CD4-positive, alpha-beta memory T cell (primary cell): ENCODE measurements at regions of chr2 and their contacts with region 1.

Region 1: DNA sequence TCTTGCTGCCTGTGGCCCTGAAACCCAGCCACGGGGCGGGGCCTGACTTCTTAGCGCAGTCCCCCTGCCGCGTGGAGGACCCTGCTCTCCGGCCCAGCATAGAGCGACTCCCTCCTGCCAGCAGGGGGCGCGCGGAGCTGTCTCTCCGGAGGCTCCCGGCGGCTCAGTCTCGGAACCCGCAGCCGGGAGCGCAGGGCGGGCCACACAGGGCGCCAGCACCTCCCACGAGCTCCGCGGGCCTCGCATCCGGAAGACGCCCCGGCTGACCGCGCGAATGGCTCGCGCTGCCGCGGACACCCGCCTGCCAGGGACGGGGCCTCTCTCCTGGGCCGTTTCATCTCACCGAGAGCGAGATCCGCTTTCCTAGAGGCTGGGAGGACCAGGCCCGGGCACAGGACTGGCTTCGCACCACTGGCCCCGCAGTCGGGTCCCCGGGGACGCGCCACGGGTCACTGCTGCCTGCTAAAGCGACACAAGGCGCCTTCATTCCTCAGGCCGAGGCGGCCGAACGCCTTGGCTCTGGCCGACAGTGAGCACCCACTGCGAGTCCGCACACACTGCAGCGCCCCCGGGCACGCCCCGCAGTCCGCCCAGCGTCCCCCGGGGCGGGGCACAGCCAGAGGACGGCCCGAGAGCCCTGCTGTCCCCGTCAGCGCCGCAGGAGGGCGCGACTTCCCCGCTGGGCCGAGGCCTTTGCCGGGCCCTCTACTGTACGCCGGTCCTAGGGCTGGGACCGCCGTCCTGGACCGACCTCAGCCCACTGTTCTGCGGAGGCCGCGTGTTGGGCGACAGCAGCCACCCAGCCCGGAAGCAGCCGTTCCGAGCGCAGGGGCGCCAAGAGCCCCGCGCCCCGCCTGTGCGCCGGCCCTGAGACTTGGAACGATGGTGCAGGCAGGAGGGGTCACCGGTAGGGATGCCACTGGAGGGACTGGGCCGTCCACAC is 39.0 kb upstream of the ARHGEF4 start:
- DNase-seq: peak; percentile 83 to 90 (median 89)
- H3K4me3 ChIP-seq: peak overlapping the region; percentile 42 to 95
- H3K4me3 Mint-ChIP-seq: peak overlapping the region; percentile 62 to 83 (median 72)
- H3K27ac ChIP-seq: peak overlapping the region; percentile 89
- H3K27ac Mint-ChIP-seq: peak overlapping the region; percentile 25 to 83 (median 62)
- H3K4me1 ChIP-seq: peaks cover 9% of the 10 kb centered on the region
- H3K4me1 Mint-ChIP-seq: peaks cover 0 to 7% (median 1%) of the 10 kb centered on the region in 4 donors
- H3K27me3 ChIP-seq: no peaks in the 10 kb centered on the region
- H3K27me3 Mint-ChIP-seq: peaks cover 0 to 2% of the 10 kb centered on the region in 2 donors

Region 2: GRCh38 chr2:130181325-130181879 is 616.4 kb before region 1 on chr2 and contains the start of gene SMPD4:
- CTCF ChIA-PET with region 1: interaction called, 3 read pairs
- POLR2A ChIA-PET with region 1: interaction called, 4 read pairs
- intact Hi-C with region 1: loop called (anchors 5 kb)
- DNase-seq: peak; percentile 97 to 98 (median 98)
- H3K4me3 ChIP-seq: peak within 1 kb of the TSS; percentile 81 to 97
- H3K4me3 Mint-ChIP-seq: peak within 1 kb of the TSS; percentile 90 to 97 (median 91)
- H3K27ac ChIP-seq: peak within 1 kb of the TSS; percentile 90
- H3K27ac Mint-ChIP-seq: peak within 1 kb of the TSS; percentile 94 to 98 (median 96)
- H3K4me1 ChIP-seq: peaks cover 28% of the 10 kb centered on the region
- H3K4me1 Mint-ChIP-seq: peaks cover 11 to 47% (median 23%) of the 10 kb centered on the region in 4 donors
- H3K27me3 ChIP-seq: no peaks in the 10 kb centered on the region
- H3K27me3 Mint-ChIP-seq: no peaks in the 10 kb centered on the region
- total RNA-seq, gene SMPD4: 48.8 to 51.5 TPM

Region 3: GRCh38 chr2:130727286-130728018 is 70.3 kb before region 1 on chr2:
- CTCF ChIA-PET with region 1: interaction called, 7 read pairs
- POLR2A ChIA-PET with region 1: interaction called, 13 read pairs
- intact Hi-C with region 1: loop called (anchors 1 kb)
- DNase-seq: peak; percentile 90 to 95 (median 92)
- H3K4me3 ChIP-seq: peak overlapping the region; percentile 81 to 83
- H3K4me3 Mint-ChIP-seq: peak overlapping the region; percentile 85 to 92 (median 88)
- H3K27ac ChIP-seq: peak overlapping the region; percentile 80
- H3K27ac Mint-ChIP-seq: peak overlapping the region; percentile 89 to 97 (median 95)
- H3K4me1 ChIP-seq: peaks cover 22% of the 10 kb centered on the region
- H3K4me1 Mint-ChIP-seq: peaks cover 5 to 34% (median 17%) of the 10 kb centered on the region in 4 donors
- H3K27me3 ChIP-seq: no peaks in the 10 kb centered on the region
- H3K27me3 Mint-ChIP-seq: no peaks in the 10 kb centered on the region

Region 4: GRCh38 chr2:130768191-130768855 is 29.4 kb before region 1 on chr2:
- CTCF ChIA-PET with region 1: no interaction called
- POLR2A ChIA-PET with region 1: no interaction called
- intact Hi-C with region 1: no loop called
- DNase-seq: no peak
- H3K4me3 ChIP-seq: no peak overlapping the region
- H3K4me3 Mint-ChIP-seq: no peak overlapping the region
- H3K27ac ChIP-seq: no peak overlapping the region
- H3K27ac Mint-ChIP-seq: no peak overlapping the region
- H3K4me1 ChIP-seq: no peaks in the 10 kb centered on the region
- H3K4me1 Mint-ChIP-seq: no peaks in the 10 kb centered on the region
- H3K27me3 ChIP-seq: no peaks in the 10 kb centered on the region
- H3K27me3 Mint-ChIP-seq: peaks cover 12 to 28% of the 10 kb centered on the region in 2 donors

Region 5: DNA sequence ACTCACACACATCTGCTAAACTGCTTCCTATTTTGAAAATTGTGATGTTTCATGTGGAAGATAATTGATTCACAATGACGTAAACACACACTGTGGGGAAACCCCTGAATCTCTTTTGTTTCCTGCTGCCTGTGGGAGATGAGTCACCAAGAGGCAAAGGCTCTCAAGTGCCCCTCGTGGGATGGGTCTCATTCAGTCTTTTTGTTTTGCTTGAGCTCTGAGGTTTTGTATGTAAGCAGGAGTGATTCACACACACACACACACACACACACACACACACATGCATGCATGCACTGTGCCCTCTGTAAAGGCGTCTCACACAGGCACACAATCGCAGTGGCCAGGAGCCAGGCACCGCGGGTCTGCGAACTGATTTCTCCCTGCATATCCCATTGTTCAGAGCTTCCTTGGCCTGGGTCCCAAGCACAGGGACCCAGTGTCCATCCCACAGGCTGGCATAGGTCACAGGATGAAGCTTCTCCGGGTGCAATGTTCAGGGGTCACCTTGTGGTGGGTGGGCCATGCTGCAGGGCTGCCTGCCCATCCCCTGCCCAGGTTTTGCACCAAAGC is 26.8 kb after region 1 on chr2:
- CTCF ChIA-PET with region 1: interaction called, 17 read pairs
- POLR2A ChIA-PET with region 1: interaction called, 10 read pairs
- intact Hi-C with region 1: loop called (anchors 1 kb)
- DNase-seq: peak; percentile 77 to 95 (median 84)
- H3K4me3 ChIP-seq: peak overlapping the region in 1 of 2 donors; percentile 42
- H3K4me3 Mint-ChIP-seq: peak overlapping the region; percentile 20 to 72 (median 34)
- H3K27ac ChIP-seq: peak overlapping the region; percentile 27
- H3K27ac Mint-ChIP-seq: peak overlapping the region; percentile 86 to 98 (median 94)
- H3K4me1 ChIP-seq: peaks cover 20% of the 10 kb centered on the region
- H3K4me1 Mint-ChIP-seq: peaks cover 11 to 35% (median 19%) of the 10 kb centered on the region in 4 donors
- H3K27me3 ChIP-seq: no peaks in the 10 kb centered on the region
- H3K27me3 Mint-ChIP-seq: no peaks in the 10 kb centered on the region

Region 6: GRCh38 chr2:130873700-130874346 is 76.1 kb after region 1 on chr2:
- CTCF ChIA-PET with region 1: interaction called, 318 read pairs
- POLR2A ChIA-PET with region 1: interaction called, 23 read pairs
- intact Hi-C with region 1: loop called (anchors 1 kb)
- DNase-seq: peak; percentile 55 to 67 (median 63)
- H3K4me3 ChIP-seq: no peak overlapping the region
- H3K4me3 Mint-ChIP-seq: no peak overlapping the region
- H3K27ac ChIP-seq: no peak overlapping the region
- H3K27ac Mint-ChIP-seq: no peak overlapping the region
- H3K4me1 ChIP-seq: no peaks in the 10 kb centered on the region
- H3K4me1 Mint-ChIP-seq: no peaks in the 10 kb centered on the region
- H3K27me3 ChIP-seq: no peaks in the 10 kb centered on the region
- H3K27me3 Mint-ChIP-seq: peaks cover 5 to 7% of the 10 kb centered on the region in 2 donors

Region 7: DNA sequence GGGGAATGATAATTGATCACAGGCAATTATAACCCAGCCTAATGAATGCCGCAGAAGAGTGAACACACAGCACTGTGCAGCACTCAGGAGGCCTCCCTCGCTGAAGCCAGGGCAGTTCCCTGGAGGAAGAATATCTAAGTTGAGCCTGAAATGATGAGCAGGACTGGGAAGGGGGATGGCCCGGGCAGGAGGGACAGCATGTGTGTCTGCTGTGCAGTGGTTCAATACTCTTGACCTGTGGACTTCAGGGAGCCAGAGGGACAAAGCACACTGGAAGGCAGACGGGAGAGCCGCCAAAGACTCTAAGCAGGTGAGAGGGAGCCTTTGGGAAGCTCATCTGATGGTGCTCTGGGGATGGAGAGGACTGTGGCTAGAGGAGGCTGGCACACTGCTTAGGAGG is 101.5 kb after region 1 on chr2:
- CTCF ChIA-PET with region 1: no interaction called
- POLR2A ChIA-PET with region 1: no interaction called
- intact Hi-C with region 1: no loop called
- DNase-seq: no peak
- H3K4me3 ChIP-seq: no peak overlapping the region
- H3K4me3 Mint-ChIP-seq: no peak overlapping the region
- H3K27ac ChIP-seq: no peak overlapping the region
- H3K27ac Mint-ChIP-seq: no peak overlapping the region
- H3K4me1 ChIP-seq: no peaks in the 10 kb centered on the region
- H3K4me1 Mint-ChIP-seq: no peaks in the 10 kb centered on the region
- H3K27me3 ChIP-seq: no peaks in the 10 kb centered on the region
- H3K27me3 Mint-ChIP-seq: peaks cover 2 to 19% of the 10 kb centered on the region in 2 donors

Region 8: DNA sequence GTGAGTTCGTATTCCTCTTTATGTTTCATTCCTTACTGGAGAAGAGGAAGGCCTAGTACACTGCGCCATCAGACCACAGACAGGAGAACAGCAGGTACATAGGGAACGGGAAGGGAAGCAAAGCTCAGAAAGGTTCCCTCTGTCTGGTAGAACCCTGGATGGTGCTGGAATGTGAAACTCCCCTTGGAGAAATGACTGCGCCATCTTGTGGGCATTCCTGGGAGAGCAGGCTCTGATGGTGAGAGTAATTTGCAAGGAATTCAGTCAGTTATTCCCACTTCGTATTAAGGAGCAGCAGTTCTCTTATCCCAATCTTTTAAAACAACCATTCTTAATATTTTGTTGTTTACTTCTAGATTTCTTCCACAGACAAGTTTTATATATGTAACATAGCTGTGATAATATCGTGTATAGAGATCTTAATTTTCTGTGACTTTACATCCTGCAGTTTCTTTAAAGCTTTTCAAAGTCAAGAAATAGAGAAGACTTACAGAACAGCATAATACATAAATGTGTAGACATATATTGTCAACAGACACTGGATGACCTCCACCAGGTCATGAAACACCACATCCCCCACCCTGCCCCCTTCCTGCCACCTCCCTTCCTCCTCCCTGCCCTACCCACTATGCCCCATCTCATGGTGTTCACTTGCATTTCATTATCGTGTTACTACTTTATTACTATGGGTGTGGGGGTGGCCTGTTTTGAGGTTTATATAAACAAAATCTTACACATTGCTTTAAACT is 122.8 kb after region 1 on chr2:
- CTCF ChIA-PET with region 1: interaction called, 80 read pairs
- POLR2A ChIA-PET with region 1: no interaction called
- intact Hi-C with region 1: loop called (anchors 1 kb)
- DNase-seq: peak in 4 of 5 donors; percentile 24 to 43 (median 30)
- H3K4me3 ChIP-seq: no peak overlapping the region
- H3K4me3 Mint-ChIP-seq: no peak overlapping the region
- H3K27ac ChIP-seq: no peak overlapping the region
- H3K27ac Mint-ChIP-seq: no peak overlapping the region
- H3K4me1 ChIP-seq: no peaks in the 10 kb centered on the region
- H3K4me1 Mint-ChIP-seq: no peaks in the 10 kb centered on the region
- H3K27me3 ChIP-seq: no peaks in the 10 kb centered on the region
- H3K27me3 Mint-ChIP-seq: peaks cover 4 to 7% of the 10 kb centered on the region in 2 donors

Region 9: DNA sequence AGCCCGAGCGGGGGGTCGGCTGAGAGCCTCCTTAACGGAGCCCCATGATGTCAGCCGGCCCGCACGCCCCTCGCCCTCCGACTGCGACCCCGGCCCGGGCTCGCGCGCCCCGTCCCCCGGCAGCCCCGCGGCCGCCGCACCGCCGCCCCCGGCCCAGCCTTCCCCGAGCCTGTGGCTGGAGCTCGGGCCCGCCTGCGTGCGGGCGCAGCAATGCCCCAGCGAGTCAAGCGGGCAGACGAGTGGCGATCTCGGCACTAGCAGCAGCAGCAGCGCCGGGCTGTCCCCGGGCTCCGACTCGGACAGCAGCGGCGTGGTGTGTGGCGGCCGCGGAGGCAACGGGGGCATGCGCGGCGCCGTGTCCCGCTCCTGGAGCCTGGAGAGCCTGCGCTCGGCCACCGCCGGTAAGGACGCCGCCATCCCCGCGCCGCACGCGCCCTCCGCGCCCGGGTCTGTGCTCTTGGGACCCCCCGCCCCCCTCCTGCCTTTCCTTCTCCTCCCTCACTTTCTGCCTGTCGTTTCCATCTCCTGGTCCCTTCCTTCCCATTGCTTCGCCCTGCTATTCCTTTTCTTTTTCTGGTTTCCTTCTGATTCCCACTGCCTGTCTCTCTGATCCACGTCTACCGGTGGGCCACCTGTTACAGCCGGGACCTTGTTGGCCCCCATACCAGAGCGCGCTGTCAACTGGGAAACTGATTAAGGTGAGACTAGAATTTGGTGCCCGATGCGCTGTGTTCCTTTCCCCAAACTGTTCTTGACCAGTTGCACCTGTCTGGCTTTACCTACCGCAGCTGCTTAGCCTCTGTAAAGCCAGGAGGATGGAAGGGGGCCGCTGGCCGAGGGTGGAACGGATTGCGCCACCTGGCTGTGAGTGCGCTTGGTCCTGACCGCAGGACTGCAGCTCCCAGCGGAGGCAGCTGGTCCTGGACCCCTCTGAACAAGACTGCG is 166.4 kb after region 1 on chr2:
- CTCF ChIA-PET with region 1: no interaction called
- POLR2A ChIA-PET with region 1: no interaction called
- intact Hi-C with region 1: no loop called
- DNase-seq: no peak
- H3K4me3 ChIP-seq: no peak overlapping the region
- H3K4me3 Mint-ChIP-seq: peak overlapping the region in 6 of 8 donors; percentile 52 to 77 (median 72)
- H3K27ac ChIP-seq: no peak overlapping the region
- H3K27ac Mint-ChIP-seq: no peak overlapping the region
- H3K4me1 ChIP-seq: no peaks in the 10 kb centered on the region
- H3K4me1 Mint-ChIP-seq: peaks cover 2 to 10% (median 7%) of the 10 kb centered on the region in 4 donors
- H3K27me3 ChIP-seq: peaks cover 8% of the 10 kb centered on the region
- H3K27me3 Mint-ChIP-seq: peaks cover 45 to 46% of the 10 kb centered on the region in 2 donors